ENCODE measurements at regions of chr17 and their contacts with region 1.

Region 1: GRCh38 chr17:28902819-28903545 is at the start of gene DHRS13:
- DNase-seq: peak; percentile 58 to 89 (median 78)
- H3K4me3 ChIP-seq: peak within 1 kb of the TSS; percentile 59 to 88 (median 77)
- H3K27ac ChIP-seq: peak within 1 kb of the TSS in 58 of 59 donors; percentile 5 to 92 (median 78)
- H3K27me3 ChIP-seq: no peaks in the 10 kb centered on the region
- CTCF ChIP-seq: peak; percentile 42 to 98 (median 85)
- total RNA-seq, gene DHRS13: 5.9 to 22.5 (median 10.1) TPM

Region 2: DNA sequence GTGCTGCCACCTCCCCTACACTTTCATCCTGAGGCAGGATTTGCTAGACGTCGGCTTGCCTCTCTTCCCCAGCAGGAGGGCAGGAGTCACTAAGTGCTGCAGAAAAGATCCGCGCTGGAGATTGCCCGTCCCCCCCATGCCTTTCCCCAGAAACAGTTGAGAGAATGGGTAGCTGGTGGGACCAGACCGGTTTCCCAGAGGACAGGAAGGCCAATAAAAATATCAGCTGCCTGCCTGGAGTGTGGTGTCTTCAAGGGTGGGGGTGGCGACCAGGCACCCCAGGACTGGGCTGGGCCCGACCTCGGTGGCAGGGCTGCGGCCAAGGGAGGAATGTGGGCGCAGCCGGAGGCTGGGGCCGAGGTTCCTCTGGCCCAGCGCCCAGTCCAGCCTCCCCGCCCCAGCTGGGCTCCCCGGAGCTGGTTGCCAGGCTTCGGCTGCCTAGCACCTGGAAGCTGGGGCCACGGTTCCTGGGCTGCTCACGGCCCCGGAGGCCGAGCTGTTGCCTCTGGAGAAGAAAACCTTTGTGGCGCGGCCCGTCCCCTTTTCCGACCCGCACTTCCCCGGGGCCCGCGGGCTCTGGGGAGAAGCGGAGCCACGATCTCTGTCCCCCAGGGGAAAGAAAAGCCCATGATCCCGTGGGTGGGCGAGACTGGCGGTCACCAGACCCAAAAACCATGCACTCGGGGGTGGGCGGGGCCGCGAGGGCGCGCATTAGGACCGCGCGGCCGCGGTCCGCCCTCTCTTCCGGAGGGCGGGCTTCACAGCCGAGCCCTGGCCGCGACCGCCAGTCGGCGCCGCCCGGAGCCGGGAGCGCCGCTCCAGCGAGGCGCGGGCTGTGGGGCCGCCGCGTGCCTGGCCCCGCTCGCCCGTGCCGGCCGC is 159.5 kb before region 1 on chr17 and contains the start of gene TRAF4:
- intact Hi-C with region 1: loop called (anchors 5 kb)
- DNase-seq: peak in 7 of 10 donors; percentile 55 to 82 (median 68)
- H3K4me3 ChIP-seq: peak within 1 kb of the TSS; percentile 57 to 98 (median 83)
- H3K27ac ChIP-seq: peak within 1 kb of the TSS; percentile 74 to 100 (median 98)
- H3K27me3 ChIP-seq: no peaks in the 10 kb centered on the region
- CTCF ChIP-seq: peak in 26 of 56 donors; percentile 6 to 57 (median 26)
- total RNA-seq, gene TRAF4: 16.6 to 92.5 (median 39.5) TPM

Region 3: DNA sequence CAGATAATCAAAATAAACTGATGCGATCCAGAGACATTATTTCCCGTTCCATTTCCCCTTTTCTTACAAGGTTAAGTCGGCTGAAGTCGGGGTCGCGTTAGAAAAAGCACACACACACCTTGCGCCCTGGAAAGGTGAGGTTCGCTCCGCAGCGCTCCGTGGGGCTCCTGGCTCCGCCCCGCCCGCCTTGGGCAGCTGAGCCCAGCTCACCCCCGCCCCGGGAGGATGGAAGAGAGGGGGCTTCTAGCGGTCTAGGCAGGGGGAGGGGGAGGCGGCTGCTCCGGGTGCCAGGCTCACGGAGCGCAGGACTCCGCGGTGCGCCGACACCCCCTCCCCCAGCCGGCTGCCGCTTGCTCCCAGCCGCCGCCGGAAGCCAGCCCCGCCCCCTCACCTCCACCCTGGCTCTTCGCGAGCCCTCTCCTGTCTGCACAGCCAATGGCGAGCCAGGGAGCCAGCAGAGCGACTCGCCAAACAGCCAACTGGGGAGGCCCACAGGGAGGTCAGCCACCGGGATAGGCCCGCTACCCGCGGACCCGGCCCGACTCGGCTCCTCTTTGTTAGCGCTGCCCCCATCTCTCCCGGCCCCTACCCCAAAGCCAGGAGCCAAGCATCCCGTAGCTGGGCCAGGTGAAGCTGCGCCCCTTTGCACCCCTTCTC is 90.8 kb before region 1 on chr17:
- intact Hi-C with region 1: loop called in 1 of 2 experiments (anchors 5 kb)
- DNase-seq: peak; percentile 95 to 99 (median 98)
- H3K4me3 ChIP-seq: peak overlapping the region; percentile 70 to 98 (median 90)
- H3K27ac ChIP-seq: peak overlapping the region; percentile 68 to 99 (median 93)
- H3K27me3 ChIP-seq: no peaks in the 10 kb centered on the region
- CTCF ChIP-seq: peak in 8 of 56 donors; percentile 4 to 45 (median 19)

Region 4: DNA sequence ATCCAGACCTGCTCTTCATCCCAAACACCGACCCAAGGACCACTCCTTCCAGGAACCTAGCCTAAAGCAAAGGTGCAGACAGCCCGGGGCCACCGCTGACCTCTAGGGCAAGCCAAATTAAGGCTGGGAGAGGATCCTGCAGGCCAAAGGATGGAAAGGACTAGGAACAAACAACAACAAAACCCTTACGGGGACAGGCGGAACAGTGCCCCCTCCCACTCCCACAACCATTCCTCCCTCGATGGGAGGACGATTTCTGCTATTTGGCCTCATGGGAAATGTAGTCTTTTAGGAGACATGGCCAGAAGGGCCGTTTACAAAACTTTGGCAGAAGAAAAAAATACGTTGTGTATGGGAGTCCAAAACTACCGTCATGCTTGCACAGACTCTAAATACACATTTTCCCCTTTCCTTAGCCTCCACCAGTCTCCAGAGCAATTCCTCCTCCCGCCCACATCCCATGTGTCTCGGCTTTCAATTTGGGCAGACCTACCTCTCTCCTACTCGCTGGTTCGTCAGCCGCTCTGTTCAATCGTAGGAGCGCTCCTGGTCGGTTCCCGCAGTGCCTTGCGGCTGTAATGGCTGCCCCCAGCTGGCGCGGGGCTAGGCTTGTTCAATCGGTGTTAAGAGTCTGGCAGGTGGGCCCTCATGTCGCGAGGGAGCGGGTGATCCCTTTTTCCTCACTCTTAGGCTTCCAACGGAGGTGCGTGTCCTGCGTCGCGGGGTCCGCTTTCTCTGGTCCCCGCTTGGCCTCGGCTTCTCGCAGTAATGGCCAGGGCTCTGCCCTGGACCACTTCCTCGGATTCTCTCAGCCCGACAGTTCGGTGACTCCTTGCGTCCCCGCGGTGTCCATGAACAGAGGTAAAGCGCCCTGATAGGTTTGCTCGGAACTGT is 48.3 kb before region 1 on chr17 and contains the start of gene ERAL1:
- intact Hi-C with region 1: loop called (anchors 2 to 5 kb)
- DNase-seq: peak; percentile 74 to 93 (median 92)
- H3K4me3 ChIP-seq: peak within 1 kb of the TSS; percentile 58 to 93 (median 81)
- H3K27ac ChIP-seq: peak within 1 kb of the TSS; percentile 56 to 97 (median 86)
- H3K27me3 ChIP-seq: no peaks in the 10 kb centered on the region
- CTCF ChIP-seq: peak in 41 of 56 donors; percentile 8 to 64 (median 41)
- total RNA-seq, gene ERAL1: 32.0 to 63.5 (median 45.6) TPM

Region 5: DNA sequence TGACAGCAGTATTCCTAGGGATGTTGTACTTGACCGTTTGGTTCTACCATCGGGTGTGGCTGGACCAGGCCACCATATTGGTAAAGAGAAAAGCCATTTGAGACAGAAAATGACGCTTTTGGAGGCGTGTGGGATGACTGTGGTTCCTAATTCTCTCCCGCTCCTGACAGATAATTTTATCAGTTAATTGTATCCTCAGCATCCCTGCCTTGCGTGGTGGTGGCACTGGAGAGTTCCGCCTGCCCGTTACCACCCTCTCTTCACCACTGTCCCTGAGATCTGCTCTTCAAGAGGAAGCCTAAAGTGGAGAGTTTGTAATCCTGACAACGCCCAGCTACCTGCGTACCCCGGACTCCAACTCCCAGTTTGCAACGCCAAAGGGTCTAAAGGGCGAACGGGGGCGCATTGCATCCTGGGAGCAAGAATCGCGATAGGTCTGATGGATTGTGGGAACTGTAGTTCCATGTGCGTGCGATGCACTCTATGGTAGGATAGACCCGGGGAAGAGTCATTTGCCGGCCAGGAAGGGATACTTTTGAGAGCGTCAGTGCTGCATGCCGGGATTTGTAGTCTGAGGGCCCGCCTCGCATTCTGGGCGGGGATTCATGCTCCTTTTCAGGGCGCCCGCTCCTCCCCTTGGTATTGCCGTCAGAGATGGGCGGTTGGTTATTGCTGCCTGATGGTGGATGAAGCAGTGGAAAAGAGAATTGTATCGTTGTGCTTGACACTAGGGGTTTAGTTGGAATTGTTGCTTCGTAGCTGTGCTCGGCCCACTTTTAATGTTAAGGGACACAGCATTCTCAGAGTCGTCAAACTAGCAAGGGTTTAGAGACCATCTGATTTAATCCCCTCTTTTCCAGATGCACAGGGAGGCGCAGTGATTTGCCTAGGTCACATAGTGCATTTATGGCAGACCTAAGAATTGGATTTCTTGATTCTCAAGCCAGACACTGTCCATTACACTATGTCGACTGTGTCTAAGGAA is 49.3 kb after region 1 on chr17:
- intact Hi-C with region 1: loop called (anchors 2 to 5 kb)
- DNase-seq: peak; percentile 97 to 100 (median 98)
- H3K4me3 ChIP-seq: peak overlapping the region; percentile 65 to 99 (median 86)
- H3K27ac ChIP-seq: peak overlapping the region; percentile 93 to 100 (median 100)
- H3K27me3 ChIP-seq: no peaks in the 10 kb centered on the region
- CTCF ChIP-seq: peak in 38 of 56 donors; percentile 7 to 55 (median 28)

Region 6: GRCh38 chr17:29089601-29090044 is 186.6 kb after region 1 on chr17:
- intact Hi-C with region 1: no loop called
- DNase-seq: peak; percentile 58 to 90 (median 68)
- H3K4me3 ChIP-seq: peak overlapping the region in 2 of 59 donors; percentile 3 to 21
- H3K27ac ChIP-seq: peak overlapping the region in 58 of 59 donors; percentile 3 to 94 (median 78)
- H3K27me3 ChIP-seq: no peaks in the 10 kb centered on the region
- CTCF ChIP-seq: peak in 2 of 56 donors; percentile 9 to 12

Measured in dorsolateral prefrontal cortex (tissue), 120 donors.